Posterior cingulate gyrus (tissue), 11 donors: ENCODE measurements at regions of chr7 and their contacts with region 1.

Region 1: GRCh38 chr7:87345166-87345927 is at the start of gene CROT:
- DNase-seq: peak; percentile 95 to 100 (median 98)

Region 2: GRCh38 chr7:87219545-87220025 is 125.8 kb before region 1 on chr7 and contains the start of gene TMEM243:
- intact Hi-C with region 1: loop called (anchors 10 kb)
- DNase-seq: peak; percentile 32 to 93 (median 60)

Region 3: DNA sequence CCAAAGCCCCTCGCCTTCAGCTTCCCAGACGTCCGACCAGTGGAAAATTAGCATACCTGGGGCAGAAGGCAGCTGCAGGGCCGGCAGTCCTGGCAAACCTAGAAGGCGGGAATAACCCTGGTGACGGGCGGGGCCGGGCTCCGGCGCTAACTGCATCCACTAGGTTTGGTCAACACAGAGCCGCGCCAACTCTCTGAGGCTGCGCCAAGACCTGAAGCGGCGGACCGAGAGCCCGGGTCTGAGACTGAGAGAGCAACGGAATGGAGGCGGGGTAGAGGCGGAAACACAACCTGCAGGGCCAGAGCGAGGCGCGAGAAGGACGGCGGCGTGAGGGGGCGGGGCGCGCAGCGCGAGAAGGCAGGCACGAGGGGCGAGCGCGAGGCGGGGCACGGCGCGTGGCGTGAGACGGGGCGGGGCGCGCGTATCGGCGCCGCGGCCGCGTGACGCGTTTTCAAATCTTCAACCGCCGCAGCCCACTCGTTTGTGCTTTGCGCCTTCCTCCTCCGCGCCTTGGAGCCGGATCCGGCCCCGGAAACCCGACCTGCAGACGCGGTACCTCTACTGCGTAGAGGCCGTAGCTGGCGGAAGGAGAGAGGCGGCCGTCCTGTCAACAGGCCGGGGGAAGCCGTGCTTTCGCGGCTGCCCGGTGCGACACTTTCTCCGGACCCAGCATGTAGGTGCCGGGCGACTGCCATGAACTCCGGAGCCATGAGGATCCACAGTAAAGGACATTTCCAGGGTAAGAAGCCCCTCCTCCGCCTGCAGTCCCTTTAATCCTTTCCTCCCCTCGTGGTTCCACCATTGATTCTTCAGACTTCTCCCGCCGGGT is 530.9 kb after region 1 on chr7 and contains the starts of genes DBF4 and SLC25A40:
- intact Hi-C with region 1: loop called (anchors 5 kb)
- DNase-seq: peak; percentile 84 to 99 (median 92)